Activated CD4-positive, alpha-beta memory T cell treated with anti-CD3 and anti-CD28 coated beads for 36 hours (primary cell): ENCODE measurements at regions of chr21 and their contacts with region 1.

Region 1: DNA sequence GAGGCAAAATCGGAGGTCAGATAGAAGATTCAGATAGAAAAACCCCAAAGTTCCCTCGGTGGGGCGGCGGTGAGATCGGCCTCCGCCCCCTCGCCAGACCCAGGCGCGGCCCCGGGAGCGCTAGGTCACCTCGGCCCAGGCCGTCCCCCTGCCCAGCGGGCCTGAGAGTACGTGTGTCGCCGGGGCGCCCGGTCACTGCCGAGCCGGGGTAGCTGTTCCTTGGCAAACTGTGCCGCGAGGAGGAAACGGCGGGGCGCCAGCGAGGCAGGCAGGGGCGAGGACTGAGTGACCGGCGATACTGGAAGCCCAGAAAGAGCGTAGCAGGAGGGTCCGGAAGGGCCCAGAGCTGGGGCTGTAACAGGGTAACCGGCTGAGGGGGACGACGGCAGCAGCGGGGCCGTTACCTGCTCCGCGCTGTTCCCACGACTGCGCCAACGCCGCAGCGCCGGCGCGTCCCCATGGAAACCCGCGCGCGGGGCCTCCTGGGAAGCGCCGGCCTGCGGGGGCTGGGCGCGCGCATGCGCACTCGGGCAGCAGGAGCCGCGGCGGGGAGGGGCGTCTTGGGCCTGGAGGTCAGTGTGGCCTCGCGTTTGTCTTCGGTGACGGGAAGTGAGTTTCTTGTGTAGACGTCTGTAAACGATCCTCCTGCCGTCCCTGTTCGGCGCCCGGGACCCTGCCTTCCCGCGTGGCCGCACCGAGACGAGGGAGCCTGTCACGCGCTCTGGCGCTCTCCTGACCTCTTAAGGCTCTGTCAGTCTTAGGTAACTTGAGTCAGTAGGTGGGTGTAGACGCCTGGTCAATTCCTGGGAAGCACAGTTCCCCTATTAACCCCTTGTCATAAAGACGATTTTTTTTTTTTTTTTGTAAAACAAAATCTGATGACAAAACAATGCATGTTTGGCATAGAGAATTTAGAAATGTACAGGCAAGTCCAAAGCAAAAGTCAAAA is at the start of gene LCA5L:
- DNase-seq: peak; percentile 93
- H3K4me3 Mint-ChIP-seq: peak within 1 kb of the TSS; percentile 84
- H3K27ac Mint-ChIP-seq: peak within 1 kb of the TSS; percentile 92
- H3K4me1 Mint-ChIP-seq: peaks cover 13% of the 10 kb centered on the region
- H3K27me3 Mint-ChIP-seq: peaks cover 4% of the 10 kb centered on the region
- total RNA-seq, gene LCA5L: 0.22 to 0.36 TPM

Region 2: DNA sequence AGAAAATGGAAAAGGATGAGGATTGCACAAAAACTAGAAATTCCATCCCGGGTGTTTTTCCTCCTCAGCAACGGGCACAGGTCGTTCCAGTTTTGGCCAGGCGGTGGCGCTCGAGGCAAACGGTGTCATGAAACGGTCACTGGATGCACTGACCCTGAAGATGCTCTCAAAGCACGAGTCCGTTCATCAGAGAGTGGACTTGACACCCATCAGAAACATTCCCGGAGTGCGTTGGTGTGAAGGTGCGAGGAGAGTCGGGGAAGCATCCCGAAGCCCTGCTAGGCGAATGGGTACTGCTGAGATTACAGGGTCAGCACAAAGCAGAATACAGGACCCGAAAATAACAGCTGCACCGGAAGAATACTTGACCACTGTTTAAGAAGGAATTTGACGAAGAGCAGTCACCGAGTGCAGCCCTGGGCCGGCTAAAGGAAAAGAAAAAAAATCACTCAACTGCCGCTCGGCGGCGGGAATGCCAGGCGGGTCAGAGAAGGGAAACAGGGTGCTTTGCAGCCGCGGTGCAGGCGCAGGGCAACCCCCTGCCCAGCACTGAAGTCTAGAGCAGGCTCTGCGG is 711.5 kb before region 1 on chr21:
- CTCF ChIA-PET with region 1: no interaction called
- POLR2A ChIA-PET with region 1: no interaction called
- intact Hi-C with region 1: loop called (anchors 10 kb)
- DNase-seq: peak; percentile 78
- H3K4me3 Mint-ChIP-seq: peak overlapping the region; percentile 65
- H3K27ac Mint-ChIP-seq: no peak overlapping the region
- H3K4me1 Mint-ChIP-seq: peaks cover 10% of the 10 kb centered on the region
- H3K27me3 Mint-ChIP-seq: peaks cover 24% of the 10 kb centered on the region

Region 3: DNA sequence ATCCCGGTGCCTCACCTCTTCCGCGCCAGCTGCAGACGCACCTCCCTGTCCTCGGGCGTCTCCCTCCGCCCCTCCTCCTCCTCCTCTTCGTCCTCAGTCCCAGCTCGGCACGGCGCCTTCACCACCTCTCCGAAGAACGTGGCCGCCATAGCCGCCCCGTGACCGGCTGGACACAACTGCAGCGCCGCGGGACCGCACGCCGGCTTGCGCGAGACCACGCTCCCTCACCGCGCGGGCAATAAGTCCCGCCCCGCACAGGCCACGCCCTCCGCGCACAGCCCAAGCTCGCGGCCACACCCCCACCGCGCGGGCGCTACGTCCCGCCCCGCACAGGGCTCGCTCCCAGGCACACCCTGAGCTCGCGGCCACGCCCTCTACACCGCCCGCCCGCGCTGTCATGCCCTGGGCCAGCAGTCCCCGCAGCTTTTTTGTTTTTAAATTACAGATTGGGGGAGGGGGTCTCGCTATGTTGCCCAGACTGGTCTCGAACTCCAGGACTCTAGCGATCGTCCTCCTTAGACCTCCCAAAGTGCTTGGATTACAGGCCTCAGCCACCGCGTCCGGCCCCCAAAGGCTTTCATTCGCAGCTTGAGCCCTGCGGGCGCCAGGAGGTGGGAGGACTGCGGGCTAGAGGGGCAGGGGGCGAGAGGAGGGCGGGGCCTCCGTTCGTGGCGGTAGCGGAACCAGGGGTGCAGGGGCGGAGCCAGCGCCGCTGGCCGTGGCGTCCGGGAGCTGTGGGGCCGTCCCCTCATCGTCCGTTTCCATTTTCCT is 262.2 kb before region 1 on chr21 and contains the start of gene PSMG1:
- CTCF ChIA-PET with region 1: interaction called, 3 read pairs
- POLR2A ChIA-PET with region 1: no interaction called
- intact Hi-C with region 1: loop called (anchors 2 kb)
- DNase-seq: peak; percentile 95
- H3K4me3 Mint-ChIP-seq: peak within 1 kb of the TSS; percentile 98
- H3K27ac Mint-ChIP-seq: peak within 1 kb of the TSS; percentile 94
- H3K4me1 Mint-ChIP-seq: peaks cover 63% of the 10 kb centered on the region
- H3K27me3 Mint-ChIP-seq: no peaks in the 10 kb centered on the region
- total RNA-seq, gene PSMG1: 82.3 to 85.9 TPM

Region 4: GRCh38 chr21:39379986-39380891 is 65.4 kb before region 1 on chr21:
- CTCF ChIA-PET with region 1: no interaction called
- POLR2A ChIA-PET with region 1: interaction called, 4 read pairs
- intact Hi-C with region 1: loop called (anchors 1 kb)
- DNase-seq: peak; percentile 96
- H3K4me3 Mint-ChIP-seq: peak overlapping the region; percentile 91
- H3K27ac Mint-ChIP-seq: peak overlapping the region; percentile 80
- H3K4me1 Mint-ChIP-seq: peaks cover 24% of the 10 kb centered on the region
- H3K27me3 Mint-ChIP-seq: peaks cover 2% of the 10 kb centered on the region

Region 5: GRCh38 chr21:39388038-39388810 is 57.4 kb before region 1 on chr21:
- CTCF ChIA-PET with region 1: interaction called, 5 read pairs
- POLR2A ChIA-PET with region 1: no interaction called
- intact Hi-C with region 1: loop called (anchors 1 kb)
- DNase-seq: peak; percentile 92
- H3K4me3 Mint-ChIP-seq: peak overlapping the region; percentile 80
- H3K27ac Mint-ChIP-seq: peak overlapping the region; percentile 87
- H3K4me1 Mint-ChIP-seq: peaks cover 32% of the 10 kb centered on the region
- H3K27me3 Mint-ChIP-seq: no peaks in the 10 kb centered on the region

Region 6: DNA sequence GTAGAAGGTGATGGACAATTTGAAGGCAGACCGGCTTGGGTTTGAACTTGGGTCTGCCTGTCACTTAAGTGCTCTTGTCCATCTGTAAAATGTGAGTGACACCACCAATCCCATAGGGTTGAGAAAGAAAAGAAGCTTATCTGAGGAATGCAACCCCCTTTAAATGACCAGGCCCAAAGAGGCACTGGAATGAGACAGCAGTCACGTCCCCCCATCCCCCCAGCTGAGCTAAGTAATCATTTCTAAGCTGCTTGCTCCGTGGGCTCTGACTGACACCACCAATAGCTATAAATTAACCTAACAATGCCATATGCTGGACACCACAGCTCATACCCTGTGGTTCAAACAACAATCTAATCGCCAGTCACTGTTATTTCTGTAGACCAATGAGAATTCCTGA is 15.1 kb before region 1 on chr21:
- CTCF ChIA-PET with region 1: interaction called, 10 read pairs
- POLR2A ChIA-PET with region 1: no interaction called
- intact Hi-C with region 1: no loop called
- DNase-seq: no peak
- H3K4me3 Mint-ChIP-seq: no peak overlapping the region
- H3K27ac Mint-ChIP-seq: no peak overlapping the region
- H3K4me1 Mint-ChIP-seq: no peaks in the 10 kb centered on the region
- H3K27me3 Mint-ChIP-seq: peaks cover 7% of the 10 kb centered on the region